ENCODE measurements at regions of chr15 and their contacts with region 1.

Region 1: DNA sequence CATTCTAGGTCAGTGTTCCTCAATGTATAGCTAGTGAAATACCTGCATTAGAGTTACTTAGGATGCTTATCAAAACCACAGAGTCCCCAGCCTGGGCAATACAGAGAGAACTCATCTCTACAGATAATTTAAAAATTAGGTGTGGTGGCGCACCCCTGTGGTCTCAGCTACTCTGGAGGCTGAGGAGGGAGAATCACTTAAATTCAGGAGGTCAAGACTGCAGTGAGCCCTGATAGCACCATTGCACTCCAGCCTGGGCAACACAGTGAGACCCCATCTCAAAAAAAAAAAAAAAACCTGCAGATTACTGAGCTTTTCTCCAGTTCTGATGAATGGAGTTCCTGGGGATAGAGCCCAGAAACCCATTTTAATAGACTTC is 10.1 kb upstream of the MINDY2 start:
- DNase-seq: no peak
- H3K4me3 ChIP-seq: no peak overlapping the region
- H3K27ac ChIP-seq: no peak overlapping the region
- H3K4me1 ChIP-seq: no peaks in the 10 kb centered on the region
- H3K27me3 ChIP-seq: no peaks in the 10 kb centered on the region
- CTCF ChIP-seq: no peak
- POLR2A ChIP-seq: no peak

Region 2: DNA sequence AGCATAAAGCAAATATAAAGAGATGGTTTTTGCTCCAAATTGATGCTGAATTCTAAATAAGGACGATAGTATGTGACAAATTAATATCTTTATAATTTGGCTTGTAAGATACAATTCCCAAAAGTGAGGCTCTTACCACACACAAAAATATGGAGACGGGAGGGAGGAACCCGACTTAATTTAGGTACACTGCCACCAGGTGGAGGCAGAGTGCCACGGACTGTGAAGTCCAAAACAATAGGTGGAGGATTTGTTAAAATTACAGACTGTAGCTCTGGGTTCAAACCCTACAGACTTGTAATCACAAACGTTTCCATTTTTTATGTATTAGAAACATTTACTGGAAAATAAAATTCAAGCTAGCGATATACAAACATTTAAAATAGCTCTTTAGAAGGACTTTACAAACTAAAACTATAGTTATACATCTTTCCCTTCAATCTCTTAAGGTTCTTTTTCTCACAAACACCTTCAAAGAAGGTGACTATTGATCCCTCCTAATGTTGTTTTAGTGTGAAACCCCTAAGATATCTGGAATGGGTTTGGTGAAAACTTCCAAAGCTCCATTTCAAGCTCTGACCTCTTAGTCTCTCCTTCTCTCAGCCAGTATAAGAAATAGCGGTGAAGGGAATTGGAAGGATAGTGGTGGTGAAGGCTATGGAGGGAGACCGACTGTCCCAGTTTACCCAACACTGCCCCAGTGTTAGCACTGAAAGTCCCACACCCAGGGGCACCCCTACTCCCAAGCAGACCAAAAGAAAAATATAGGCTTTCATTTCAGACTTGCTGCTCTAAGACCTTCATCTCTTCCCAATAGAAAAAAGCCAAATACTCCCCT is 533.1 kb before region 1 on chr15:
- intact Hi-C with region 1: loop called in 1 of 2 experiments (anchors 10 kb)
- DNase-seq: peak; percentile 62 to 87 (median 81)
- H3K4me3 ChIP-seq: no peak overlapping the region
- H3K27ac ChIP-seq: peak overlapping the region in 1 of 5 donors; percentile 33
- H3K4me1 ChIP-seq: no peaks in the 10 kb centered on the region
- H3K27me3 ChIP-seq: no peaks in the 10 kb centered on the region
- CTCF ChIP-seq: peak; percentile 65 to 90 (median 81)
- POLR2A ChIP-seq: no peak

Region 3: DNA sequence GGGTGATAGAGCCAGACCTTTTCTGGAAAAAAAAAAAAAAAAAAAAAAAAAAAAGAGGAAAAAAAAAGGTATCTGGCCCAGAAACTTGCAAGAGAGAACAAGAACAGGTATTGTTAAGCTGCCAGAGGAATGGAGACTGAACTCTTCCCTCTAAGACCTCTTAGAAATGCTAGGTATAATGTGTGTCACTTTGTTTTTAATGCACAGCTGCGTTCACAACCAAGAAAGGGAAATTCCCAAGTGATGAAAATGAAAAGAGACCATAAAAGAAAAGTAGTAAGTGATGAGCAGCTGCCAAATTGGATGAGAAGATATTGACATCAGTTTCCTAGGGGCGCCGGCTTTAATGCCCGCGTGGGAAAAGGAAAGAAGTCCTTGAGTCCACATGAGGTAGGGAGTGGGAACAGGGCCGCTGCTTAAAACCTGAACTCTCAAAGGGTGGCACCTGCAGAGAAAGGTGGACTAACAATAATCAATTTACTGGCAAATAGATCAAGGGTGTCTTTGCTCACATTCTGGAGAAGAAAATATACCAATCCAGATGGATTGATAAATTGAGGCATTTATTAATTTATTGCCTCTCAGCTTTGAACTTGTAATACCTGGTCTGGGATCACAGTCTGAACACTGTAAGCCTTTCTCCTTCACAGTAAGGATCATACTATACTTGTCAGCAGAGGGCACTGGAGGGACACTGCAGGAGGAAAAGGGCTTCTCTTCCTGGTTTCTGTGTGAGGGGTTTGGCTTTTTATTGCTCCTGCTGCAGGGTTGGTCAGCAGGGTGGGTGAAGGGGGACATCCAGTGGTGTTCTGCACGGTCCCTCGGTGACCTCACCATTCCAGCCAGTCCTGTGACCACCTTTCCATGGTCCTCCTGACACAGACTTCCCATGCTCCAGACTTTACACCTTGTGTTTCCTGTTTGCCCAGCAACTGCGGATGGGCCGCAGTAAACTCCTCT is 491.3 kb before region 1 on chr15:
- intact Hi-C with region 1: loop called in 1 of 2 experiments (anchors 2 kb)
- DNase-seq: peak in 6 of 7 donors; percentile 24 to 55 (median 39)
- H3K4me3 ChIP-seq: no peak overlapping the region
- H3K27ac ChIP-seq: no peak overlapping the region
- H3K4me1 ChIP-seq: no peaks in the 10 kb centered on the region
- H3K27me3 ChIP-seq: no peaks in the 10 kb centered on the region
- CTCF ChIP-seq: peak; percentile 42 to 68 (median 67)
- POLR2A ChIP-seq: no peak